ENCODE measurements at regions of chr3 and their contacts with region 1.

Region 1: GRCh38 chr3:37218206-37218605 is 43.8 kb upstream of the LRRFIP2 start:
- DNase-seq: no peak
- H3K4me3 ChIP-seq: no peak overlapping the region
- H3K27ac ChIP-seq: no peak overlapping the region
- H3K4me1 ChIP-seq: peaks cover 40% of the 10 kb centered on the region
- H3K27me3 ChIP-seq: no peaks in the 10 kb centered on the region
- CTCF ChIP-seq: no peak

Region 2: DNA sequence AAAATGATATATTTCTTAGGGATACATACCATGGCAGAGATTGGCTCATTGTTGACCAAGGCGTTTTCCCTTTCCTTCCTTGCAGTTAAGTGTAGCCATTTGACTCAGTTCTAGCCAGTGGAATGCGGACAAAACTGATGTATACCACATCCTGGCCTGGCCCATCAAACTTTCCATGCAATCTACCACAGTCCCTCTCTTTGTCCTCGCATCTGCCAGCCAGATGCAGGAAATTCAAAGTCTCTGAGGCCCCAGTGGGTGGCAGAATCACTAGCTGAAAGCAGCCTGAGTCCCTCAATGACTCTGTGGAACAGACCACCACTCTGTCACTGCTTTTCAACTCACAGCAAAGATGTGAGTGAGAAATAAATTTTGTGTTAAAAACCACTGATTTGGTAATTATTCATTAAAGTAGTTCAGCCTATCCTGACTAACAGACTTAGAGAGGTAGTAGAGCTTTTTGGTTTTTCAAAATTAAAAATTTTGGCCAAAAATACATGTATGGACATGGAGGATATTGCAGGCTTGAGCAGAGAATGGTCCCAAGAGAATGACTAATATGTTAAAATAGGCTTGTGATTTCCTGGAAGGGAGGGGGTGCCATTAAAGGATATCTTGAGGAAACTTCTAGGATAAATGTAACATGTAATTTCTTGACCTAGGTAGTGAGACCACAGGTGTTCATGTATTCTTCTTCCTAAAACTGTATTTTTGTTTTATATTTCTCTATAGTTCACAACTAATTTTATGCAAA is 54.8 kb before region 1 on chr3:
- CTCF ChIA-PET with region 1: no interaction called
- dilution Hi-C with region 1: loop called (anchors 5 kb)
- in situ Hi-C with region 1: no loop called
- intact Hi-C with region 1: no loop called
- DNase-seq: peak; percentile 39
- H3K4me3 ChIP-seq: no peak overlapping the region
- H3K27ac ChIP-seq: peak overlapping the region; percentile 32
- H3K4me1 ChIP-seq: peaks cover 17% of the 10 kb centered on the region
- H3K27me3 ChIP-seq: no peaks in the 10 kb centered on the region
- CTCF ChIP-seq: no peak

Measured in mammary epithelial cell (primary cell).